ENCODE measurements at regions of chr17 and their contacts with region 1.

Region 1: DNA sequence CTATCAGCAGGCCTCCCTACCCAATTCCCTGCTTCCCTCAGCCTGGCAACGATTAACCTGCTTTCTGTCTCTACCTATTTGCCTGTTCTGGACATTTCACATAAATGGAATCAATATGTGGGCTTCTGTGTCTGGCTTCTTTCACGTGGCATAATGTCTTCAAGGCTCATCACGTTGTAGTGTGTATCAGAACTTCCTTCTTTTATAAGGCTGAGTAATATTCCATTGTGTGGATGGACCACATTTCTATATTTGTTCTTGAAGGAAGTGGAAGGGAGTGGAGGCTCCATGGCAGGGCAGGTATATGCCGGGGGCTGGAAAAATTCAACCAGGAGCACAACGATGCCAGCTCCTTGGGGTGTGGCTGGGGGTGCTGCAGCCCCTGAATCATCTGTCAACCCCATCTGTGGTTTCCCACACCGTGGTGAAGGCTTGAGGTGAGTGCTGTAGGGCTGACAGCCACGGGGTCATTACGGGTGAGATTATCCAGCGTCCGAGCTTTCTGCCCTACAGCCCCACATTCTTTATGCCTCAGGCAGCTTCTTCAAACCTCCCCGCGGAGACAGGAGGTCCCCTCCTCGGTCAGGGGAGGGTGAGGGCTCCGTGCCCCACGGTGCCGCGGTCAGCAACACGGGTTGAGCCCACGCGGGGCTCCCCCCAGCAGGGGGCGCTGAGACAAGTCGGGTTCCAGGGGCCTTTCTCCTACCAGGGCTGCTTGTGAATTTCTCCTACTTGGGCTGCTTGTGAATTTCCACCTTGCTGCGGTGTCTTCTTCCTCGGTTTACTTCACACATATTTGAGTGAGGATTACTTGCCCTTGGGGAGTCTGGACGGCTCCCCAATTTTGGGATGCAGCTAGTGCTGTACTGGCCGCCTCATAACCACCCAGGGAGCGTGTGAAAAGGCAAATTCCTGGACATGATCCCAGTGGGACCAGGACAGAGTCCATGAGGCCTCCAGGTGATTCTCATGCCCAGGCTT is 18.3 kb upstream of the WFIKKN2 start:
- DNase-seq: peak; percentile 54
- H3K4me3 Mint-ChIP-seq: no peak overlapping the region
- H3K27ac Mint-ChIP-seq: no peak overlapping the region
- H3K4me1 Mint-ChIP-seq: peaks cover 27% of the 10 kb centered on the region
- H3K27me3 Mint-ChIP-seq: peaks cover 34% of the 10 kb centered on the region

Region 2: DNA sequence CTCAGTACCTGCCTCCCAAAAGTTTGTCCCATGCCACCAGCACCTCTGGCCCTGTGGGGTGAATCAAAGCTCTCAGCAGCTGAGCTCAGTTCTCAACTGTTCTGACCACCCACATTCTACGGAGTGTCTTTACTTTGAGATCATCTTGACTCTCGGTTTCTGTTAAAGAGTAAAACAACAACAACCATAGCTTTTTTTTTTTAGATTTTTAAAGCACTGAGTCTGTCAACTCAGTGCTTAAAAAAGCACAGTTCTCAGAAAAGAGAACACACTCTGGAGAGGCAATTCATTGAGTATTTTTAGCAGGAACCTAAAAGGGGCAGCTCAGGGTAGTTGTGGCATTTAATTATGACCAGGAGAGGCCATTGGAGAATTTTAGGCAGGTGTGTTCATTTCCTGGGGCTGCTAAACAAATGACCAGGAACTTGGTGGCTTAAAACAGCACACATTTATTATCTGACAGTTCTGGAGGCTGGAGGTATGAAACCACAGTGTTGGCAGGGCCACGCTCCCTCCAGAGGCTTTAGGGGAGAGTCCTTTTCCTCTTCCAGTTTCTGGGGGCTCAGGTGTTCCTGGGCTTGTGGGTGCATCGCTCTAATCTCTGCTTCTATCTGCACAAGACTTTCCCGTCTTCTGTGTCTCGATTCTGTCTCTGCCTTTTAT is 11.6 kb after region 1 on chr17:
- CTCF ChIA-PET with region 1: interaction called, 11 read pairs
- POLR2A ChIA-PET with region 1: no interaction called
- DNase-seq: no peak
- H3K4me3 Mint-ChIP-seq: no peak overlapping the region
- H3K27ac Mint-ChIP-seq: peak overlapping the region; percentile 12
- H3K4me1 Mint-ChIP-seq: peaks cover 12% of the 10 kb centered on the region
- H3K27me3 Mint-ChIP-seq: peaks cover 9% of the 10 kb centered on the region

Region 3: GRCh38 chr17:50919321-50920085 is 102.4 kb after region 1 on chr17:
- CTCF ChIA-PET with region 1: no interaction called
- POLR2A ChIA-PET with region 1: no interaction called
- DNase-seq: peak; percentile 91
- H3K4me3 Mint-ChIP-seq: peak overlapping the region; percentile 58
- H3K27ac Mint-ChIP-seq: peak overlapping the region; percentile 91
- H3K4me1 Mint-ChIP-seq: peaks cover 57% of the 10 kb centered on the region
- H3K27me3 Mint-ChIP-seq: peaks cover 3% of the 10 kb centered on the region